Thyroid gland (tissue), 4 donors: ENCODE measurements at regions of chr10 and their contacts with region 1.

Region 1: DNA sequence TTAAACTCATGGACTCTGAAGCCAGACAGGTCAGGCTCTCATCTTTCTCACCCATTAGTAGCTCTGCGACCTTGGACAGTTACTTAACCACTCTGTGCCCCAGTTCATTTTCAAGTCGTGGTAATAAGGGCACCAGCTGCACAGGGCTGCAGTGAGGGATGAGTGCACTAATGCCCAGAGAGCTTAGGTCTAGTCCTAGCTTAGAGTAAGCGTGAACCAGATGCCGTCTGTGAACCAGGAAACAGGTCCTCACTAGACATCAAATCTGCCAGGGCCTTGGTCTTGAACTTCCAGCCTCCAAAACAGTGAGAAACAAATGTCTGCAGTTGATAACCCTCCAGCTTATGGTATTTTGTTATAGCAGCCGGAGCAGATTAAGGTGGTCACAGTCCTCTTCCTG is 222.4 kb upstream of the PFKP start:
- DNase-seq: no peak
- H3K4me3 ChIP-seq: no peak overlapping the region
- H3K27ac ChIP-seq: no peak overlapping the region
- H3K4me1 ChIP-seq: no peaks in the 10 kb centered on the region
- H3K27me3 ChIP-seq: no peaks in the 10 kb centered on the region
- CTCF ChIP-seq: no peak
- POLR2A ChIP-seq: no peak

Region 2: GRCh38 chr10:3043512-3044368 is 198.8 kb after region 1 on chr10:
- intact Hi-C with region 1: loop called (anchors 5 kb)
- DNase-seq: peak; percentile 77 to 80
- H3K4me3 ChIP-seq: no peak overlapping the region
- H3K27ac ChIP-seq: peak overlapping the region; percentile 34 to 83 (median 54)
- H3K4me1 ChIP-seq: peaks cover 26 to 41% of the 10 kb centered on the region in 2 donors
- H3K27me3 ChIP-seq: no peaks in the 10 kb centered on the region
- CTCF ChIP-seq: peak; percentile 36 to 96 (median 82)
- POLR2A ChIP-seq: no peak

Region 3: DNA sequence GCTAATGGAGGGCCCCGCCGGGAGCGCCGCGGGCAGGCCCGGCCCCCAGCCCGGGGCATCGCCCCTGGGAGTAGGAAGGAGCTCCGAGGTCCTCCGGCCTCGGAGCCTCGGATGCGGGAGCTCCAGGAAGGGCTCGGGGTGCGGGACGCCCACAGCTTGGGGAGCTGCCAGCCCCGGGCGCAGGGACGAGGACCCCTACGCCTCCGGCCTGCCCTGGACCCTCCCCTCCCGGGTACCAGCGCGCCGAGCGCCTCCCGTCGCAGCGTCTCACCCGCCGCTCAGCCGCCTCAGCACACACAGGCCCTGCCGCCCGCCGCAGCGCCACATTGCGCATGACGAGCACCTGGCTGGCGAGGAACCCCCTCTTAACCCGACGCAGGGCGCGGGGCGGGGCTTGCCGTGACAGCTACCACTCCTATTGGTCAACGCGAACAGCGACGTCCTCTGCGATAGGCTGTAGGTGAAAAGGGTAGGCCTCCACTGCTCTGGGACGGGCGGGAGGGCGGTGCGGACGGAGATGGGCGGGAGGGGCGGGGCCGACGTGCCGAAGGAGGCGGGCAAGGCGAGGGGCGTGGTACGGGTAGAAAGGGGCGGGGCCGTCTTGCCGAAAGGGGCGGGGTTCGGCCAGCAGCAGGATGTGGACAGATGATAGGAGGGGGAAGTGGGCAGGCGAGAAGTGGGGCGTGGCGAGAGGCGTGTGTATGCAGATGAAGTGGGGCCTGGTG is 327.7 kb after region 1 on chr10 and contains the start of gene PITRM1:
- intact Hi-C with region 1: no loop called
- DNase-seq: peak; percentile 99
- H3K4me3 ChIP-seq: peak within 1 kb of the TSS; percentile 5 to 97 (median 62)
- H3K27ac ChIP-seq: peak within 1 kb of the TSS; percentile 67 to 71 (median 68)
- H3K4me1 ChIP-seq: peaks cover 6 to 15% of the 10 kb centered on the region in 2 donors
- H3K27me3 ChIP-seq: no peaks in the 10 kb centered on the region
- CTCF ChIP-seq: no peak
- POLR2A ChIP-seq: peak; percentile 79 to 99
- total RNA-seq, gene PITRM1: 68.2 to 107 (median 86.2) TPM